ENCODE measurements at regions of chr7 and their contacts with region 1.

Region 1: DNA sequence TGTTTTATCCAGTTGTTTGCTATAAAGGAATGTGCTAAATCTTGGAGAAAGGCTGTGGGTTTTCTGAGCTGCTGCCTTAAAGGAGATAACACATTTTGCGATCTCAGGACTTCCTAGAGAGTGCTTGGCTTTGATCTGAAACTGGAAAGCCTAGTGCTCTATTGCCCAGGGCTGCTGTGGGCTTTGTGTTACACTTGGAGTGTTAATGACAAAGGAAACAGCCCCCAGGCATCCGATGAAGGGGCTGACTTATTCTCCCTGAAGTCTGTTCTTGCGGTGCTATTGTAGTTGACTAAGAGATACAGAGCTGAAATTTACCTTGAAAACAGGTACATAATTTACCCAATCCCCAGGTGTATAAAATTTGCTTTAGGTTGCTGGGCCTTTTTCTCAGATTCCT is 74.5 kb downstream of the SND1 start:
- DNase-seq: no peak
- ATAC-seq: no peak
- H3K4me3 Mint-ChIP-seq: no peak overlapping the region
- H3K27ac Mint-ChIP-seq: no peak overlapping the region
- H3K4me1 Mint-ChIP-seq: no peaks in the 10 kb centered on the region
- H3K27me3 Mint-ChIP-seq: no peaks in the 10 kb centered on the region
- CTCF ChIP-seq: no peak

Region 2: GRCh38 chr7:127550247-127550646 is 176.2 kb before region 1 on chr7:
- CTCF ChIA-PET with region 1: no interaction called
- POLR2A ChIA-PET with region 1: no interaction called
- intact Hi-C with region 1: no loop called
- DNase-seq: no peak
- ATAC-seq: no peak
- H3K4me3 Mint-ChIP-seq: no peak overlapping the region
- H3K27ac Mint-ChIP-seq: no peak overlapping the region
- H3K4me1 Mint-ChIP-seq: no peaks in the 10 kb centered on the region
- H3K27me3 Mint-ChIP-seq: no peaks in the 10 kb centered on the region
- CTCF ChIP-seq: no peak

Region 3: GRCh38 chr7:127708788-127709187 is 17.7 kb before region 1 on chr7:
- CTCF ChIA-PET with region 1: interaction called, 25 read pairs
- POLR2A ChIA-PET with region 1: no interaction called
- intact Hi-C with region 1: no loop called
- DNase-seq: peak; percentile 84
- ATAC-seq: peak; percentile 72
- H3K4me3 Mint-ChIP-seq: no peak overlapping the region
- H3K27ac Mint-ChIP-seq: no peak overlapping the region
- H3K4me1 Mint-ChIP-seq: peaks cover 2% of the 10 kb centered on the region
- H3K27me3 Mint-ChIP-seq: no peaks in the 10 kb centered on the region
- CTCF ChIP-seq: peak; percentile 76

Measured in activated CD8-positive, alpha-beta T cell treated with anti-CD3 and anti-CD28 coated beads for 36 hours (primary cell).